ENCODE measurements at regions of chr1 and their contacts with region 1.

Region 1: GRCh38 chr1:59699227-59699847 is 115.4 kb upstream of the HOOK1 start:
- DNase-seq: no peak
- H3K4me3 ChIP-seq: no peak overlapping the region
- H3K27ac ChIP-seq: no peak overlapping the region
- H3K4me1 ChIP-seq: no peaks in the 10 kb centered on the region
- H3K27me3 ChIP-seq: no peaks in the 10 kb centered on the region
- CTCF ChIP-seq: peak; percentile 92 to 94

Region 2: DNA sequence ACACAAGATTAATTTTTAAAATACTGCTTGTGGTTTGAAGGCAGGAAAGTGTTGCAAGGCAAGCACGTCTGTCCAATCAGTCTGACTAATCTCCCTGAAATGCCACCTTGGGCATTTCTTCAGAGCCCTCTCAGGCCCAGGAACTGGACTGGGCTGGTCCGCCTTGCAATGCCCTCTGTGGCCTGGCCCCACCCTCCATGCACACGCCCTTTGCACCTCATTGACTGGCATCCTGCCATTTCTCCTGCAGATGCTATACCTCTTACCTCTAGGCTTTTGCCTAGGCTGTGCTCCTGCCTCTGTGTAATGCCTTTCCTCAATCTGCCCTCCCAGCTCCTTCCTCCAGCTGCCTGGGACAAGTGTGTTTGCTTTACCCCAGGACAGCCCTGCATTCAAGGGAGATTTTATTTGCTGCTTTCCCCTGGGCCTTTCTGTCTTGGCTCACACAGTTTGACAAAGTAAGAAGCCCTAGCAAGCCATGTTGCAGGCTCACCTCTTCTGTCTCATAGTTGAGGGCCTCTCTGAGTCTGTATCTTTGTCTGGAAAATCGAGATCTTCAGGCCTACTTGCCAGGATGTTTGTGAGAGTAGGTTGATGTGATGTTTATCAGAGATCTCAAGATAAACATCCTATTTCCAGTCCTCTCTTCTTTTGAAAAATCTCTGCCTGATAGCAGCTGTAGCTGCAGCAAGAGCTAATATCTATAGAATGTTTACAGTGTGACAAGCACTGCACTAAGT is 766.3 kb before region 1 on chr1:
- CTCF ChIA-PET with region 1: no interaction called
- dilution Hi-C with region 1: no loop called
- in situ Hi-C with region 1: no loop called
- intact Hi-C with region 1: loop called (anchors 5 kb)
- DNase-seq: peak; percentile 98
- H3K4me3 ChIP-seq: no peak overlapping the region
- H3K27ac ChIP-seq: peak overlapping the region; percentile 91
- H3K4me1 ChIP-seq: peaks cover 52% of the 10 kb centered on the region
- H3K27me3 ChIP-seq: no peaks in the 10 kb centered on the region
- CTCF ChIP-seq: no peak

Region 3: DNA sequence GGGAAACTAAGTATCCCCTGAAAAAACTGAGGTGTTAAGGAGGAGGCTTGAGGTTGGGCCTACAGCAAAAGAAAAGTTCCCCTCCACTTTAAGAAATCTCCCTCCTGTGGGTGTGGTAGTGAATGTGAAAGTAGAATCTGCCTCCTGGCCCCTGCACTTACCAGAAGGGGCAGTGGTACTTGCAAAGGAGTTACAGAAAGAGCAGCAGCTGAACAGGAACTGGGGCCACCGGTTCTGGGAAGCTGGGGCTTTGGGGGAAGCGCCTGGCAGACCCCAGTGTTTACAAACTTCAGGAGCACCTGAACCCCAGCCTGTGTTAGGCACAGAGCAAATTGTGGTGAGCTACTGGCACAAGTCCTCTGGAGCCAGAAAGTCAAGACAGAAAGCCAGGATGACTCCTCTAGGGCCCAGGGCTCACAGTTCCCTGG is 652.6 kb before region 1 on chr1:
- CTCF ChIA-PET with region 1: no interaction called
- dilution Hi-C with region 1: no loop called
- in situ Hi-C with region 1: no loop called
- intact Hi-C with region 1: loop called (anchors 10 kb)
- DNase-seq: no peak
- H3K4me3 ChIP-seq: no peak overlapping the region
- H3K27ac ChIP-seq: no peak overlapping the region
- H3K4me1 ChIP-seq: peaks cover 12% of the 10 kb centered on the region
- H3K27me3 ChIP-seq: no peaks in the 10 kb centered on the region
- CTCF ChIP-seq: no peak

Region 4: GRCh38 chr1:59076612-59077011 is 622.7 kb before region 1 on chr1:
- CTCF ChIA-PET with region 1: no interaction called
- dilution Hi-C with region 1: no loop called
- in situ Hi-C with region 1: loop called in 1 of 2 experiments (anchors 25 kb)
- intact Hi-C with region 1: no loop called
- DNase-seq: no peak
- H3K4me3 ChIP-seq: no peak overlapping the region
- H3K27ac ChIP-seq: no peak overlapping the region
- H3K4me1 ChIP-seq: peaks cover 11% of the 10 kb centered on the region
- H3K27me3 ChIP-seq: no peaks in the 10 kb centered on the region
- CTCF ChIP-seq: peak; percentile 13 to 33

Region 5: GRCh38 chr1:59296358-59297256 is 402.7 kb before region 1 on chr1 and contains the start of gene FGGY:
- CTCF ChIA-PET with region 1: no interaction called
- dilution Hi-C with region 1: no loop called
- in situ Hi-C with region 1: loop called in 1 of 2 experiments (anchors 25 kb)
- intact Hi-C with region 1: loop called (anchors 1 kb)
- DNase-seq: peak; percentile 98
- H3K4me3 ChIP-seq: peak within 1 kb of the TSS; percentile 28 to 62 (median 58)
- H3K27ac ChIP-seq: peak within 1 kb of the TSS; percentile 82
- H3K4me1 ChIP-seq: peaks cover 14% of the 10 kb centered on the region
- H3K27me3 ChIP-seq: no peaks in the 10 kb centered on the region
- CTCF ChIP-seq: no peak
- total RNA-seq, gene FGGY: 10.3 to 14.7 TPM

Region 6: GRCh38 chr1:59316497-59317128 is 382.7 kb before region 1 on chr1:
- CTCF ChIA-PET with region 1: no interaction called
- dilution Hi-C with region 1: no loop called
- in situ Hi-C with region 1: loop called in 1 of 2 experiments (anchors 25 kb)
- intact Hi-C with region 1: no loop called
- DNase-seq: no peak
- H3K4me3 ChIP-seq: no peak overlapping the region
- H3K27ac ChIP-seq: no peak overlapping the region
- H3K4me1 ChIP-seq: no peaks in the 10 kb centered on the region
- H3K27me3 ChIP-seq: no peaks in the 10 kb centered on the region
- CTCF ChIP-seq: no peak

Region 7: GRCh38 chr1:59596441-59596861 is 102.9 kb before region 1 on chr1:
- CTCF ChIA-PET with region 1: no interaction called
- dilution Hi-C with region 1: no loop called
- in situ Hi-C with region 1: no loop called
- intact Hi-C with region 1: loop called (anchors 2 kb)
- DNase-seq: peak; percentile 98
- H3K4me3 ChIP-seq: no peak overlapping the region
- H3K27ac ChIP-seq: peak overlapping the region; percentile 87
- H3K4me1 ChIP-seq: peaks cover 38% of the 10 kb centered on the region
- H3K27me3 ChIP-seq: no peaks in the 10 kb centered on the region
- CTCF ChIP-seq: no peak

Measured in mammary epithelial cell (primary cell).